ENCODE measurements at regions of chr17 and their contacts with region 1.

Region 1: DNA sequence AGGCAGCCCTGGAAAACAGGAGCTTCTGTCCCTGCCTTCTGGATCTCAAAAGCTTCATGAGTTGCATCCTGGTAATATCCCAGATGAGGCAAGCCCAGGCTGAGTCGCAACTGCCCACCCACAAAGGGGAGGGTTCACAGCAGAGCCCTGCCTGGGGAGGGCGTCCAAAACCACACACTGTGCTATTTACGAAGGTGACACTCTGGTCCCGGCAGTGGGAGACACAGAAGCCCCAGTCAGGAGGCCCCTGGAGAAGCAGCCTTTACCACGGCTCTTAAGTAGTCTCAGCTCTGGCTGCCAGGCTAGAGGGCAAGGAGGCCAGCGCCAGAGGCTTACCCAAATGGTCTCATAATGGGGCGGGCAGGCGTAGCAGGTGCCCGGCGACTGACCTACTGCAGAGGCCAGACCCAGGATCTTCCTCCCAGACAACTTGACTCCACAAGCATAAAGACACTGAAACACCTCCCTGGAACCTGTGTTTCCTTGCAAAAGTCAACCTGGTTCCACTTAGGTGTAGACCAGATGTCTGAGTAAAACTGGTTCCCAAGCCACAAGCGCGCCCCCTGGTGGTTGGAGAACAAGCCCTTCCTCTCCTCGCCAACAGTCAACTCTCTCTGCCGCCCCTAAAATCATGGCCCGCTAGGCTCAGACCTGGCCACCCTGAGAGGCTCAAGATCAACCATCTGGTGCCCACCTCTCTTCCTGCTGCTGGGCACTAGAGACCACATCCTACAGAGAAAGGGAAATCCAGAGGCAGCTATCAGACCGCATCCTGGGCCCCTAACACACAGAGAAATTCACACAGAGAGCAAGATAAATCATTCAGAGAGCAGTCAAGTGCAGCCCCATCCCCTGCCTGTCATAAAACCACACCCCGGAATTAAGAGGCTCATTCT is 5.2 kb downstream of the AXIN2 start:
- DNase-seq: peak; percentile 85 to 96 (median 92)
- ATAC-seq: peak; percentile 43
- H3K4me3 ChIP-seq: peak overlapping the region; percentile 66
- H3K4me3 Mint-ChIP-seq: no peak overlapping the region
- H3K27ac ChIP-seq: peak overlapping the region; percentile 31 to 36
- H3K27ac Mint-ChIP-seq: no peak overlapping the region
- H3K4me1 ChIP-seq: peaks cover 12% of the 10 kb centered on the region
- H3K4me1 Mint-ChIP-seq: peaks cover 18% of the 10 kb centered on the region
- H3K27me3 ChIP-seq: no peaks in the 10 kb centered on the region
- H3K27me3 Mint-ChIP-seq: no peaks in the 10 kb centered on the region
- CTCF ChIP-seq: peak; percentile 81

Region 2: DNA sequence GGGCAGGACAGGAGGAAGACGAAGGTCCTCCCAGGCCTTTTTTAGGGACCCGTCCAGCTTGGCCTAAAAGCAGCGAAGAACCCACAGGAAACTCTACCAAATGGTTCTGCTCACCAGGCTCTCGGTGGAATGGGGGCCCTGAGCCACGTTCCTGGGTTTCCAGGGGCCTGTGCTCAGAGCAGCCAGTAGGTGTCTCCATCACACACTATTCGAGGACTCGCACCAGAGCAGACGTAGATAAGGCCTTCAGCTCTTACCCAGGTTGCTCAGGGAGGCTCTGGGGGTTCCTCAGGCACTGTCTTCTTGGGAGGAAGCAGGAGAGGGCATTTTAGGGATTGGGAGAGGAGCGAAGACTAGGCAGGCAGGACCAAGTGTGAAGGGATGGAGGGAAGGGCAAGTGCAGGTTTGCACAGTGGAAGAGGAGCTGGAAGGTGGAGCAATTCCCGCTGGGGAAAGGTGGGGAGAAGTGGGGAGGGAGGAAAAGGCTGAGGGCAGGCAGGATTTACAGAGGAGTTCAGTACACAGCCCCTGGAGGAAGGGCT is 262.0 kb before region 1 on chr17:
- CTCF ChIA-PET with region 1: interaction called, 6 read pairs
- POLR2A ChIA-PET with region 1: interaction called, 3 read pairs
- intact Hi-C with region 1: loop called (anchors 1 kb)
- DNase-seq: peak; percentile 32 to 78 (median 50)
- ATAC-seq: peak; percentile 88
- H3K4me3 ChIP-seq: no peak overlapping the region
- H3K4me3 Mint-ChIP-seq: no peak overlapping the region
- H3K27ac ChIP-seq: no peak overlapping the region
- H3K27ac Mint-ChIP-seq: no peak overlapping the region
- H3K4me1 ChIP-seq: peaks cover 7% of the 10 kb centered on the region
- H3K4me1 Mint-ChIP-seq: peaks cover 5% of the 10 kb centered on the region
- H3K27me3 ChIP-seq: no peaks in the 10 kb centered on the region
- H3K27me3 Mint-ChIP-seq: peaks cover 3% of the 10 kb centered on the region
- CTCF ChIP-seq: peak; percentile 76

Region 3: DNA sequence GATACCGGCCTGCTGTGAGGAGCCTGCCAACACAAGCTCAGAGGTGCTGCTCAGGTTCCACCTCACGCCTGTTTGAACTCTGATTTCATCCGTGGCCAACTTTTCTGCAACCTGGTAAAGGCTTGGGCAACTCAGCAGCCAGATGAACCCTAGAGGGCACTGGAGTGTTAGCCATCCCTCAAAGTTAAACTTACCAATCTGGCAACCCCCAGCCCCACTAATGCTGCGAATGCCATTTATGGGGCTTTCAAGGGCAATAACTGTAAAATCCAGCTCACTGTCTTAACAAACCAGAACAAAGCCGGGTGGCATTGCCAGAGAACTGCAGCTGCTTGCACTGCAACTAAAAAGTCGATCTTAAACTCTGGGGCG is 100.3 kb before region 1 on chr17:
- CTCF ChIA-PET with region 1: interaction called, 5 read pairs
- POLR2A ChIA-PET with region 1: interaction called, 3 read pairs
- intact Hi-C with region 1: loop called (anchors 1 to 2 kb)
- DNase-seq: peak in 13 of 14 experiments; percentile 5 to 64 (median 12)
- ATAC-seq: peak; percentile 61
- H3K4me3 ChIP-seq: no peak overlapping the region
- H3K4me3 Mint-ChIP-seq: no peak overlapping the region
- H3K27ac ChIP-seq: no peak overlapping the region
- H3K27ac Mint-ChIP-seq: no peak overlapping the region
- H3K4me1 ChIP-seq: peaks cover 7% of the 10 kb centered on the region
- H3K4me1 Mint-ChIP-seq: no peaks in the 10 kb centered on the region
- H3K27me3 ChIP-seq: peaks cover 0 to 3% of the 10 kb centered on the region in 2 experiments
- H3K27me3 Mint-ChIP-seq: no peaks in the 10 kb centered on the region
- CTCF ChIP-seq: peak; percentile 45

Region 4: DNA sequence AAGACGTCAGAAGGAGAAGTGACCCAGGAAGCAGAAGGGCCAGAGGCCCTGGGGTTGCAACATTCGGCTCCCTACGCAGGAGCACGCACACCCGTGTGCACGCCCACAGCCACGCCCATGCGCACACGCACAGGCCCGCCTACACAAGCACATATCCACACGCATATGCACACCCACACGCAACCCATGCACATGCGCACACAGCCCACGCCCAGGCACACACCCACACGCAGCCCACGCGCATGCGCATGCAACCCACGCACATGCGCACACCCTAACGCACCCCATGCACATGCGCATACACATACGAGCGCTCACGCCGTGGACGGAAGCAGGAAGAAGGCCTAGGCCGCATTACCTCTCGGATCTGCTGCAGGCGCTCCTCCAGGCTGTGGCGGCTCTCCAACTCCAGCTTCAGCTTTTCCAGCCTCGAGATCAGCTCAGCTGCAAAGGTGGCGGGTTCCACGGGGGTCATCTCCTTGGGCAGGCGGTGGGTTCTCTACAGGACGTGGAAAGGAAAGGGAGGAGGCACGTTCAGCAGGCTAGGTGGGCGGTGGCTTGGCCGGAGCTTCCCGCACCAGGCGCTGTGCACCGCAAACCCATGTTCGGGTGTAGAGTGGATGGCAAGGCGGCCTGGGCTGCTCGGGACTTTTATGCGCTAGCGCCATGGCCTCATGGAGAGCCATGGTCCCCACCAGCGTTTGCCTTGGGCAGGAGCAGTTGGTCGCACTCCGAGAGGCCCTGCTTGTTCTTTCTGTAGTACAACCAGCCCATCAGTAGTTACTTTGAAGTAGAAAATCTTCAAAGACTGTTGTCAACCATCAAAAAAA is 18.2 kb before region 1 on chr17:
- CTCF ChIA-PET with region 1: interaction called, 17 read pairs
- POLR2A ChIA-PET with region 1: interaction called, 21 read pairs
- intact Hi-C with region 1: loop called (anchors 1 to 2 kb)
- DNase-seq: peak; percentile 53 to 88 (median 64)
- ATAC-seq: peak; percentile 70
- H3K4me3 ChIP-seq: peak overlapping the region; percentile 50
- H3K4me3 Mint-ChIP-seq: peak overlapping the region; percentile 83
- H3K27ac ChIP-seq: no peak overlapping the region
- H3K27ac Mint-ChIP-seq: peak overlapping the region; percentile 89
- H3K4me1 ChIP-seq: peaks cover 21% of the 10 kb centered on the region
- H3K4me1 Mint-ChIP-seq: peaks cover 61% of the 10 kb centered on the region
- H3K27me3 ChIP-seq: no peaks in the 10 kb centered on the region
- H3K27me3 Mint-ChIP-seq: no peaks in the 10 kb centered on the region
- CTCF ChIP-seq: no peak

Region 5: DNA sequence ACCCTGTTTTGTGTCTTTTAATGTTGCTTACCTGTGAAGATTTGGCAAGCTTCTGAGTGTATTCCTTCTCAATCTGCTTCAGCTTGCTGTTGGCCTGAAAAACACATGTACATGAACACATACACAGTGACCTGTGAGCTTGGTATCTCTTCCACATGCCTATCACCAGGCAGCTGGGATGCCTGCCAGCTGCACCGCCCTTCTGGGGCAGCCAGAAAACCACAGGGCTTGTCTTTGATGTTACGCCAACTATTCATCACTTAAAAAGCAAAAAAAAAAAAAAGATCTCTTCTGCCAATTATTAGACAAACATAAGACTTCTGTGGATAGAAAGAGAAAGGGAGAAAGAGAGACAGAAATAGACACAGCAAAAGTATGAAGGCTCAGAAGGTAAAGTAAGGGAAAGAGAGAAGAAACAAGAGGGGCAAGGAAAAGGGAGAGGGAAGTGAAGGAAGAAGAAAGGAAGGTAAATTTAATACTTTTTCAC is 194.4 kb after region 1 on chr17:
- CTCF ChIA-PET with region 1: no interaction called
- POLR2A ChIA-PET with region 1: no interaction called
- intact Hi-C with region 1: loop called in 1 of 2 experiments (anchors 10 kb)
- DNase-seq: peak; percentile 40 to 84 (median 56)
- ATAC-seq: peak; percentile 89
- H3K4me3 ChIP-seq: no peak overlapping the region
- H3K4me3 Mint-ChIP-seq: peak overlapping the region; percentile 26
- H3K27ac ChIP-seq: no peak overlapping the region
- H3K27ac Mint-ChIP-seq: peak overlapping the region; percentile 4
- H3K4me1 ChIP-seq: peaks cover 9% of the 10 kb centered on the region
- H3K4me1 Mint-ChIP-seq: peaks cover 34% of the 10 kb centered on the region
- H3K27me3 ChIP-seq: no peaks in the 10 kb centered on the region
- H3K27me3 Mint-ChIP-seq: no peaks in the 10 kb centered on the region
- CTCF ChIP-seq: no peak

Measured in CD4-positive, alpha-beta T cell (primary cell).